ENCODE measurements at regions of chr19 and their contacts with region 1.

Region 1: DNA sequence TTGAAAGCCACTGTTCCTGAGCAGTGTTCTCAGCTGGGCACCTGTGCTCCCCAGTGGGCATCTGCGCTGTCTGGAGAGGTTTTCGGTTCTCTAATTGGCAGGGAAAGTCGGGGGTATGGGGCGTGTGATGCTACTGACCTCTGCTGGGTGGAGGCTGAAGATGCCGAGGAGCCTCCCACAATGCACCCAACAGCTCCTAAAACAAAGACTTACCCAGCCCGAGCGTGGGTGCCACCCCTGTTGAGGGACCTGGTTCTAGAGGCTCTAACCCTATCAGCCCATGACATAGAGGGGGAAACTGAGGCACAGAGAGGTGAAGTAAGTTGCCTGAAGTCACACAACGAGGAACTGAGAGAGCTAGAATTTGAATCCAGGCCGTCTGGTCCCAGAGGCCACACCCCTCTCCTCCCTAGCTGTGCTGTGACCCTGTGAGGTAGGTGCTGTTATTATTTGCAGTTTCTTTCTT is 2.3 kb downstream of the SPACA4 start:
- DNase-seq: peak in 1 of 2 experiments; percentile 76
- H3K4me3 ChIP-seq: no peak overlapping the region
- H3K27ac ChIP-seq: no peak overlapping the region
- H3K4me1 ChIP-seq: peaks cover 0 to 6% (median 2%) of the 10 kb centered on the region in 4 experiments; a peak in 4 of 7 replicates
- H3K27me3 ChIP-seq: no peaks in the 10 kb centered on the region
- CTCF ChIP-seq: peak; percentile 78 to 87 (median 81)
- EP300 ChIP-seq: no peak
- POLR2A ChIP-seq: no peak
- RAD21 ChIP-seq: peak; percentile 77 to 87

Region 2: DNA sequence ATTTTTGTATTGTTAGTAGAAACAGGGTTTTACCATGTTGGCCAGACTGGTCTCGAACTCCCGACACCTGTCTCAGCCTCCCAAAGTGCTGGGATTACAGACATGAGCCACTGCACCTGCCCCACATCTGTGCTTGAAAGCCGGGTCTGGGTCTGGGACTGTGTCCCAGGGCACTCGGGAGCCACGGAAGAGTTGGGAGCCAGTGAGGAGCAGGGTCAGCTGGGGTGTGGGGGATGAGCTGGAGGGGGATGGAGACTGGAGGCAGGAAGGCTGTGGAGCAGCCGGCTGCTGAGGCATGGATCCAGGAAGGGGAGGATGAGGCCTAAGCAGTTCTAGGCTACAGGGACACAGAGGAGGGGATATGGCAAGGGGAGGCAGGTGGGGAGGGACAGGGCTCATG is 13.0 kb before region 1 on chr19:
- CTCF ChIA-PET with region 1: interaction called, 143 read pairs
- POLR2A ChIA-PET with region 1: interaction called, 788 read pairs
- DNase-seq: no peak
- H3K4me3 ChIP-seq: no peak overlapping the region
- H3K27ac ChIP-seq: no peak overlapping the region
- H3K4me1 ChIP-seq: no peaks in the 10 kb centered on the region
- H3K27me3 ChIP-seq: 0 out of 7 replicates have a peak, but pooled peaks cover 0 to 3% (median 0%) of the 10 kb centered on the region in 4 experiments
- CTCF ChIP-seq: no peak
- EP300 ChIP-seq: no peak
- POLR2A ChIP-seq: no peak
- RAD21 ChIP-seq: no peak

Region 3: GRCh38 chr19:48618916-48619691 is 10.3 kb after region 1 on chr19 and contains the starts of genes RPL18 and SPHK2:
- CTCF ChIA-PET with region 1: interaction called, 16 read pairs
- POLR2A ChIA-PET with region 1: interaction called, 788 read pairs
- DNase-seq: peak; percentile 97 to 98
- H3K4me3 ChIP-seq: peak within 1 kb of the TSS; percentile 83 to 97 (median 94)
- H3K27ac ChIP-seq: peak within 1 kb of the TSS; percentile 87
- H3K4me1 ChIP-seq: peaks cover 3 to 40% (median 32%) of the 10 kb centered on the region in 4 experiments
- H3K27me3 ChIP-seq: no peaks in the 10 kb centered on the region
- CTCF ChIP-seq: peak in 1 of 3 experiments; percentile 9; a peak in 1 of 4 replicates
- EP300 ChIP-seq: no peak; a peak in 1 of 3 replicates
- POLR2A ChIP-seq: peak; percentile 95 to 99
- RAD21 ChIP-seq: no peak
- total RNA-seq, gene RPL18: 1,669 and 1,693 TPM in 2 replicates
- total RNA-seq, gene SPHK2: 60.9 and 61.6 TPM in 2 replicates

Region 4: DNA sequence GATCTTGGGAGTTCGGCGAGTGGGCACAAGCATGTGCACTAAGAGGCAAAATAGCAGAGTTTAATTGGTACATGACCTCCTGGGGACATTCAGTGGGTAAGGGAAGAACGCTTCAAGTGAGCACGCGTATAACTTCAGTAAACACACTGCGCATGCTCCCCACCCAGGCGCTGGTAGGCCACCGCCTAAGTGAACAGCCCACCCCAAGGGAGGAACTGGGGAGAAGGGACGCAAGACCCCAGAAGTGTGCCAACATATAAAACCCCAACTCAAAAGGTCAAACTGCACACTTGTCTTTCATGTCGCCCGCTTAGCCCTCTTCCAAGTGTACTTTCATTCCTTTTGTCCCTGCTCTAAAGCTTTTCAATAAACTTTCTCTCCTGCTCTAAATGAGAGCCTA is 74.5 kb after region 1 on chr19:
- CTCF ChIA-PET with region 1: no interaction called
- POLR2A ChIA-PET with region 1: no interaction called
- DNase-seq: no peak
- H3K4me3 ChIP-seq: no peak overlapping the region
- H3K27ac ChIP-seq: no peak overlapping the region
- H3K4me1 ChIP-seq: no peaks in the 10 kb centered on the region; a peak in 1 of 7 replicates
- H3K27me3 ChIP-seq: no peaks in the 10 kb centered on the region
- CTCF ChIP-seq: no peak
- EP300 ChIP-seq: no peak
- POLR2A ChIP-seq: no peak
- RAD21 ChIP-seq: no peak

Measured in H1 (cell line).